ENCODE measurements at regions of chr1 and their contacts with region 1.

Region 1: GRCh38 chr1:210360852-210361477 is 32.3 kb downstream of the HHAT start:
- DNase-seq: peak; percentile 76
- H3K4me3 Mint-ChIP-seq: no peak overlapping the region
- H3K27ac Mint-ChIP-seq: no peak overlapping the region
- H3K4me1 Mint-ChIP-seq: peaks cover 18% of the 10 kb centered on the region
- H3K27me3 Mint-ChIP-seq: no peaks in the 10 kb centered on the region
- CTCF ChIP-seq: peak; percentile 83

Region 2: DNA sequence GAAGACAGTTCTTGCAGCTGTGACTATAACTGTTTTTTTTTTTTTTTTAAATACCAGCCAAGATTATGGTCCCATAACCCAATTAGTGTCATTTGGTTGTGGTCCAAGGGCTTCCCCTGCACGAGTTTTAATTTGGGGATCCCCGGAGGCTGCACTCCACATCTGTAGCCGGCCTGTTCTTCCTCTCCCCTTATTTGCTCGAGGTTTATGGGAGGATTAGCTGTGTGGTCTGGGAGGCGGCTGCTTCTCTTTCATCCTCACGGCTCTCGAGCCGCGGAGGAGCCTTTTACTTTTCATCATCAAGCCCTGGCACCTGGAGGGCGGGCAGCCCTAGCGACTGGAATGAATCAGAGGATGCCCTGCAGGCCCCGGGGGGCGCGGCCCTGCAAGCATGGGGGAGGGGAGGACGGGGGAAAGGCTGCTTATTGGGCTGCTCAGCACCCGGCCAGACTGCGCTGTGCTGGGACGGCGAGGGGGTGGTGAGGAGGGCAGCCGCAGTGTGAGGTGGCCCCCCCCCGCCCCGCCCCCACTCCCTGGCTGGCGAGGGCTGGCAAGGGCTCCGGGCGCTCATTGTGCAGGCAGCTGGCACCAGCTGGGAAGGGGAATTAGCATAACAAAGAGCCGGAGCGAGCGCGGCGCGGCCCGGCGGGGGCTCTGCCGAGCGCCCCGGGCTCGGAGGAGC is 109.8 kb before region 1 on chr1:
- CTCF ChIA-PET with region 1: no interaction called
- POLR2A ChIA-PET with region 1: no interaction called
- intact Hi-C with region 1: no loop called
- DNase-seq: peak; percentile 83
- H3K4me3 Mint-ChIP-seq: peak overlapping the region; percentile 62
- H3K27ac Mint-ChIP-seq: no peak overlapping the region
- H3K4me1 Mint-ChIP-seq: peaks cover 8% of the 10 kb centered on the region
- H3K27me3 Mint-ChIP-seq: peaks cover 54% of the 10 kb centered on the region
- CTCF ChIP-seq: no peak

Region 3: DNA sequence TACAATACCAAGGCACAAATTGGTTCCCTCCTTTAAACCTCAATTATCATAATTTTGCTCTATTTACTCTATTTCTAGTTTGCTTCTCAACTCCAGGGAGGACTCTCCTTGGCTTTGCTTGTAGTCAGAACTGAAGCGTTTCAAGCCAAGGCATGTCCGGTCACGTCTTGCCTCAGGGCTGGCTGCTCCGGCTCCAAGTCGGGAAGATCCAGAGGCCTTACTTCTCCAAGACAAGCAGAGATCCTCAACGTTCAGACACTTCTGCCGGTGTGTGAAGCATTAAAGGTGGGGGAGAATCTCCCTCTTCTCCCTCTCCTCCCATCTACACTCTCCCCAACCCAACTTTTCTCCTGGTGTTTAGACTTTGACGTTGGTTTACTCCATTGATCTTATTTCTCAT is 39.4 kb before region 1 on chr1:
- CTCF ChIA-PET with region 1: interaction called, 12 read pairs
- POLR2A ChIA-PET with region 1: interaction called, 4 read pairs
- intact Hi-C with region 1: no loop called
- DNase-seq: peak; percentile 95
- H3K4me3 Mint-ChIP-seq: peak overlapping the region; percentile 4
- H3K27ac Mint-ChIP-seq: peak overlapping the region; percentile 93
- H3K4me1 Mint-ChIP-seq: peaks cover 19% of the 10 kb centered on the region
- H3K27me3 Mint-ChIP-seq: no peaks in the 10 kb centered on the region
- CTCF ChIP-seq: no peak

Region 4: GRCh38 chr1:210328746-210329503 is 32.0 kb before region 1 on chr1 and contains the start of gene HHAT:
- CTCF ChIA-PET with region 1: interaction called, 216 read pairs
- POLR2A ChIA-PET with region 1: interaction called, 7 read pairs
- intact Hi-C with region 1: no loop called
- DNase-seq: peak; percentile 95
- H3K4me3 Mint-ChIP-seq: peak within 1 kb of the TSS; percentile 81
- H3K27ac Mint-ChIP-seq: peak within 1 kb of the TSS; percentile 87
- H3K4me1 Mint-ChIP-seq: peaks cover 26% of the 10 kb centered on the region
- H3K27me3 Mint-ChIP-seq: no peaks in the 10 kb centered on the region
- CTCF ChIP-seq: no peak
- total RNA-seq, gene HHAT: 4.6 and 4.9 TPM in 2 replicates

Region 5: DNA sequence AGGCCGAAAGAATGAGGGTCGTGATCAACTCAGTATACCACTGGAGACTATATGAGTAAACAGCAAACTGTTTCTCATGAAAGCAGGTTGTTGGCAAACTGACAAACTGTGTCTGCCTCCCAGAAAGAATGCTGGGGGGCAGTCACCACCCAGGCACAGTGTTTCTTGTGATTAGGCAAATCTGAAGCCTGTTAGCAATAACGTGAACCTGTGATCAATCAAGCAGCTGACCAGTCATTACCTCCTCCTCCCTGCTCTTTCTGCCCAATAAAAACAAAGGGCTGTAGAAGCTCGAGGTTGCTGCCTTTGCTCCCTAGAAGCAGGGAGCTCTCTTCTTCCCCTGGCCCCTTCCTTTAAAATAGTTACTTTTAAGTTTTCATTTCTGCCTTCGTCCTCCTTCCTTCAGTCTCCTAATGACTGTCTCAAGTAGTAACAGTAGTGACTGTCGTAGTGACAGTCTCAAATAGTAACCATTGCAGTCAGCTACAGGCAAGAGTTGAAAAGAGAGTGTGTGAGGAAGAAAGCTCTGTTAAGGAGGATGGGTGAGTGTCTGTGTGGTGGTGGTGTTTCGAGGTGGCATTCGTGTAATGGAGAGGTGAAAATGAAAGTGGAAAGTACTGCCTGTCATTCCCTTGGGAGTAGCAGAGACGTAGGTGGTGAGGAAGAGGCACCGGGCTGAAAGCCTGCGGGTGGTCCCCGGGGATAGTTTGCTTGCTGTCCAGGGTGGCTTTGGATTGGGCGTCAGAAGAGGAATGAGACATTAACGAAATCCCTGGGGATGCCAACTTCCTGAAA is 17.8 kb before region 1 on chr1:
- CTCF ChIA-PET with region 1: interaction called, 216 read pairs
- POLR2A ChIA-PET with region 1: interaction called, 3 read pairs
- intact Hi-C with region 1: no loop called
- DNase-seq: peak; percentile 33
- H3K4me3 Mint-ChIP-seq: no peak overlapping the region
- H3K27ac Mint-ChIP-seq: no peak overlapping the region
- H3K4me1 Mint-ChIP-seq: no peaks in the 10 kb centered on the region
- H3K27me3 Mint-ChIP-seq: no peaks in the 10 kb centered on the region
- CTCF ChIP-seq: no peak

Region 6: DNA sequence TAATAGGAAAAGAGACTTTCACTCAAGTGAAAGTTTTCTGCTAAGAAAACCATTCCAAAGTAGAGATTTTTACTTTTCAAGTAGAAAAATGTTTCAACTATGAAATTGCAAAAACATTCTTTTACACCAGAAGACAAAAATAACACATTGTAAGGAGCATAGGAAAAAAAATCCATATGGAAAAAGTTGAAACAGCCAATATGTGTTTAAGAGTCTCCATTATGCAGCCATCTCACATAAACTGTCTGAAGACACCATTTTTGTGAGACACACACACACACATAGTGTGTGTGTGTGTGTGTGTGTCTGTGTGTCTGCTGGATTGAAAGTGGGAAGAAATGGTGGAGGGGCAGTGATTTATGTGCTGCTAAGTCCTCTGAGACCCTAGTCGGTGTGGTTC is 129.8 kb after region 1 on chr1:
- CTCF ChIA-PET with region 1: no interaction called
- POLR2A ChIA-PET with region 1: no interaction called
- intact Hi-C with region 1: no loop called
- DNase-seq: no peak
- H3K4me3 Mint-ChIP-seq: no peak overlapping the region
- H3K27ac Mint-ChIP-seq: no peak overlapping the region
- H3K4me1 Mint-ChIP-seq: no peaks in the 10 kb centered on the region
- H3K27me3 Mint-ChIP-seq: peaks cover 12% of the 10 kb centered on the region
- CTCF ChIP-seq: no peak

Region 7: GRCh38 chr1:210605099-210605498 is 244.1 kb after region 1 on chr1:
- CTCF ChIA-PET with region 1: no interaction called
- POLR2A ChIA-PET with region 1: no interaction called
- intact Hi-C with region 1: no loop called
- DNase-seq: no peak
- H3K4me3 Mint-ChIP-seq: no peak overlapping the region
- H3K27ac Mint-ChIP-seq: no peak overlapping the region
- H3K4me1 Mint-ChIP-seq: peaks cover 5% of the 10 kb centered on the region
- H3K27me3 Mint-ChIP-seq: no peaks in the 10 kb centered on the region
- CTCF ChIP-seq: no peak

Measured in MCF 10A (cell line).